HEK293 (cell line): ENCODE measurements at regions of chr9 and their contacts with region 1.

Region 1: GRCh38 chr9:100437860-100438805 is 11.2 kb downstream of the MSANTD3 start:
- H3K4me3 ChIP-seq: no peak overlapping the region
- H3K27ac ChIP-seq: no peak overlapping the region
- H3K4me1 ChIP-seq: no peaks in the 10 kb centered on the region
- CTCF ChIP-seq: no peak

Region 2: DNA sequence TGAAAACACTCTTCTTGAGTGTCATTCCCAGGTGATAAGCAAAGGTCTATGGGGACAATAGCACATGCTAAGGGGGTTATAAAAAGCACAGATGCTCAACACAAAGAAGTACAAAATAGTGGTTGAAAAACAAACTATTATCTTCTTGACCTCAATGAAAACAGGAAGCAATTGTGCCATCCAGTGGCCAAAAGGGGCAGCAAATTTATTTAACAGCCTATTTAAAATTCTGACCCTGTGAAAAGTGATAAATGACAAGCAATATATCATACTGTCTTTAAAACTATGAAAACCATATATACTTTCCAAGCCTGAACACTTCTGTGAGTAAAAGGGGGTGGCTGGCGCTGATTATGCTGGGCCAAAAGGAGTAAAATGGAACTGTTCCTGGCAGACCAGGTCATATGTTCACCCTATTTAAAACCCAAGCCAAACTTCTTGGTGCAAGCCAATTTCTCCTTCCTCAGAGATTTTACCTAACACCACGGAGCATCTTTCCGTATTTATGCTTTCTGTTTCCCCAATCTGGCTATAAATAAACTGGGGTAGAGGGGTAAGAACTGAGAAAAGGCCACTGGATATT is 115.1 kb before region 1 on chr9:
- CTCF ChIA-PET with region 1: interaction called, 11 read pairs
- POLR2A ChIA-PET with region 1: no interaction called
- H3K4me3 ChIP-seq: no peak overlapping the region
- H3K27ac ChIP-seq: no peak overlapping the region
- H3K4me1 ChIP-seq: no peaks in the 10 kb centered on the region
- CTCF ChIP-seq: no peak

Region 3: DNA sequence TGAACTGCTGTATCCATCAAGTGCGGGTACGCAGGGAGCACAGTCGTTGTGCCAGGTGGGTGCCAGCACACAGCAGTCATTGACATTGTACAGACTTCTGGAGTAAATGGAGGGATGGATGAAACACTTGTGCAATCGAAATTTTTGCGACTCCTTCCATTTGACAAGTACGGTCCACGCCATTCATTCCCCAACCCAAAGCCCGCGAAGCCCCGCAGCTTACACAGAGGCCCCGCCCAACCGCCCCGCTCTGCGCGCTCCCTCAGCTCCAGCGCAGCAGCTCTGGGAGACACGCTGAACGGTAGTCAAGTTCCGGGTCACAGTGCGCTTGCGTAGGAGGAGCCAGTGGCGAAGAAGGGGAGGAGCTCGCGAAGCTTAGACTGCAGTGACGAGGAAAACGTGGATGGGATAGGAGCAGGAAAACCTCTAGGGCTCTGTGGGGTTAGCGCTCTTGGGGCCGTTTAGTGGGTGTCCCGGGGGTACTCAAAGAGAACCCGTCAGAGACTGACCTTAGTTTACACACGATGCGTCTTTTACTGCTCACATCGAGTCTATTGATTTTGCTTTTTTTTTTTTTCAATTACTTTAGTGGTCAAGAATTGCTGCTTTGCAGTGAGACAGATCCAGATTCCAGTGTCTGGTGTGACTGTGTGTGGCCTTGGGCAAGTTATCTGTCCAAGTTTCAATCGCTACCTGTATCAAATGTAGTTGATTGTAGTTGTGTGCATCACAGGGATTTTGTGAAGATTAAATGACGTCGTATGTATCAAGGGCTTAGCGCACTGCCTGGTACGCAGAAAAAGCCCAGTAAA is 26.5 kb before region 1 on chr9:
- CTCF ChIA-PET with region 1: interaction called, 10 read pairs
- POLR2A ChIA-PET with region 1: no interaction called
- H3K4me3 ChIP-seq: peak overlapping the region; percentile 49
- H3K27ac ChIP-seq: no peak overlapping the region
- H3K4me1 ChIP-seq: no peaks in the 10 kb centered on the region
- CTCF ChIP-seq: no peak

Region 4: GRCh38 chr9:100426530-100427428 is 11.4 kb before region 1 on chr9 and contains the start of gene MSANTD3:
- CTCF ChIA-PET with region 1: interaction called, 26 read pairs
- POLR2A ChIA-PET with region 1: interaction called, 3 read pairs
- H3K4me3 ChIP-seq: peak within 1 kb of the TSS; percentile 76
- H3K27ac ChIP-seq: peak within 1 kb of the TSS; percentile 88
- H3K4me1 ChIP-seq: peaks cover 10% of the 10 kb centered on the region; the same call in 1 of the 2 replicates
- CTCF ChIP-seq: no peak

Region 5: GRCh38 chr9:100449420-100449819 is 11.3 kb after region 1 on chr9:
- CTCF ChIA-PET with region 1: interaction called, 19 read pairs
- POLR2A ChIA-PET with region 1: no interaction called
- H3K4me3 ChIP-seq: no peak overlapping the region
- H3K27ac ChIP-seq: no peak overlapping the region
- H3K4me1 ChIP-seq: no peaks in the 10 kb centered on the region
- CTCF ChIP-seq: no peak

Region 6: DNA sequence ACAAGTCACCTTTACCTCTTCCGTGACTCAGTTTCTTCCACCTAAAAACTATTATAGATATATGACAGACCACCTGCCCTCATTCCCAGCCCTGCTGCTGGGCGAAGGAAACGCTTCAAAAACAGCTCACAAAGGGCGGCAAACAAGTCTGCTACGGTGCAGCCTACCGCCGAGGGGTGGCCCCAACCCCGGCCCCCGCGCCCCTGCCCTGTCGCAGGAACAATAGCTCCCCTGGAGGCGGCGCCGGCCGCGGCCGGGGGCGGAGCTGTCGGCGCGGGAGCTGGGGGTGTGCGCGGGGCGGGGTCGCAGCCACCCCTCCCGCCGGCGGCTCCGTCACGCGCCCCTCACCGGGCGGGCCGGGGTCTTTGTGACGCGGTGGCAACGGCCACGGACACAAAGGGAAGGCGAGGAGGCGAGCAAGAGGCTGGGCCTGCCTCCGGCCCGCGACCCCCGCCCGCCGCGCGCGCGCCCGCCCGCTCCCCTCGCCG is 34.7 kb after region 1 on chr9 and contains the start of gene TMEFF1:
- CTCF ChIA-PET with region 1: interaction called, 10 read pairs
- POLR2A ChIA-PET with region 1: interaction called, 3 read pairs
- H3K4me3 ChIP-seq: peak within 1 kb of the TSS; percentile 91
- H3K27ac ChIP-seq: peak within 1 kb of the TSS; percentile 54; the same call in 1 of the 2 replicates
- H3K4me1 ChIP-seq: peaks cover 8% of the 10 kb centered on the region; the same call in 1 of the 2 replicates
- CTCF ChIP-seq: no peak